Activated CD4-positive, alpha-beta T cell treated with anti-CD3 and anti-CD28 coated beads for 36 hours (primary cell): ENCODE measurements at regions of chr7 and their contacts with region 1.

Region 1: GRCh38 chr7:82044497-82045080 is 274.7 kb upstream of the HGF start:
- DNase-seq: peak; percentile 24
- ATAC-seq: no peak
- H3K4me3 Mint-ChIP-seq: no peak overlapping the region
- H3K27ac Mint-ChIP-seq: no peak overlapping the region
- H3K4me1 Mint-ChIP-seq: no peaks in the 10 kb centered on the region
- H3K27me3 Mint-ChIP-seq: no peaks in the 10 kb centered on the region

Region 2: GRCh38 chr7:81925530-81925929 is 119.1 kb before region 1 on chr7:
- CTCF ChIA-PET with region 1: no interaction called
- POLR2A ChIA-PET with region 1: no interaction called
- intact Hi-C with region 1: no loop called
- DNase-seq: no peak
- ATAC-seq: no peak
- H3K4me3 Mint-ChIP-seq: no peak overlapping the region
- H3K27ac Mint-ChIP-seq: no peak overlapping the region
- H3K4me1 Mint-ChIP-seq: no peaks in the 10 kb centered on the region
- H3K27me3 Mint-ChIP-seq: no peaks in the 10 kb centered on the region

Region 3: GRCh38 chr7:82477733-82478515 is 433.3 kb after region 1 on chr7:
- CTCF ChIA-PET with region 1: no interaction called
- POLR2A ChIA-PET with region 1: no interaction called
- intact Hi-C with region 1: loop called in 1 of 2 experiments (anchors 10 kb)
- DNase-seq: no peak
- ATAC-seq: no peak
- H3K4me3 Mint-ChIP-seq: no peak overlapping the region
- H3K27ac Mint-ChIP-seq: no peak overlapping the region
- H3K4me1 Mint-ChIP-seq: no peaks in the 10 kb centered on the region
- H3K27me3 Mint-ChIP-seq: no peaks in the 10 kb centered on the region

Region 4: GRCh38 chr7:82572195-82572880 is 527.7 kb after region 1 on chr7:
- CTCF ChIA-PET with region 1: interaction called, 6 read pairs
- POLR2A ChIA-PET with region 1: no interaction called
- intact Hi-C with region 1: loop called (anchors 1 to 10 kb)
- DNase-seq: peak; percentile 83
- ATAC-seq: peak; percentile 61
- H3K4me3 Mint-ChIP-seq: no peak overlapping the region
- H3K27ac Mint-ChIP-seq: no peak overlapping the region
- H3K4me1 Mint-ChIP-seq: no peaks in the 10 kb centered on the region
- H3K27me3 Mint-ChIP-seq: no peaks in the 10 kb centered on the region

Region 5: GRCh38 chr7:82605247-82605872 is 560.8 kb after region 1 on chr7:
- CTCF ChIA-PET with region 1: interaction called, 4 read pairs
- POLR2A ChIA-PET with region 1: no interaction called
- intact Hi-C with region 1: loop called (anchors 10 kb)
- DNase-seq: peak; percentile 13
- ATAC-seq: no peak
- H3K4me3 Mint-ChIP-seq: no peak overlapping the region
- H3K27ac Mint-ChIP-seq: no peak overlapping the region
- H3K4me1 Mint-ChIP-seq: no peaks in the 10 kb centered on the region
- H3K27me3 Mint-ChIP-seq: no peaks in the 10 kb centered on the region

Region 6: DNA sequence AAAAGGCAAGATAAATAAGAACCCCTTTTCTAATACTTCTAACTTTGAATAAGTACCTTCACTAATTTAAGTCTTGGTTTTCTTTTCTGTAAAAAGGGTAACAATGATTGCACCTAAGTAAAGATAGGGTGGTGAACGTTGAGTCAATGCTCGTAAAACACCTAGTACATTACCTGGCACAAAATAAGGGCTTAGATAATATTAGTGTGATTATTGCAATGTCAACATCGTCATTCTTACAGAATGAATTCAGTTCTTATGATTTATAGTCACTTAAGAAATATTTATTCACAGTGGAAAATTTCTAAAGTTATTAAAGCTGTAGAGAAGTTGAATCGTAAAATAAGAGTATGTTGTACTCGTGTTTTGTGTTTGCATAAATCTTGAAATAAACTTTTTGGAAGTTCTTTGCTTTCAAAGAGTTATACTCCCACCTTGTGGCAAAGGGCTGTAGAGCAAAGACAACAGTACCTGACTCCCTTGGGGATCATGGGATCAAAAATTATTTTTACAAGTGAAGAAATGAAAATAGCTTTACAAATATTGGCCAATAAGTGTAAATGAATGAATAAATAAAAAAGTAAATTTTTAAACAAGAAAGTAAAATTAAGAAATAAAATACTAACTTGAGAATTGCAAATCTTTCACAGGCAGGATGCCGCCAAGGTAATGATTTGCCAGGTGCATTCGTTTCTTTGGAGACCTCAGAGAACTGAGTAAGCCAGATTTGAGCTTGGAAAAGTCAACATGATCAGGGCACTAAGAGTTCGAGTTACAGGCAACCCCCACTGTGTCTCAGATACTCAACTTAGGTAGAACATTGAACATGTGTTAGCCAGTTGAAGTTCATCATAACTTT is 684.8 kb after region 1 on chr7:
- CTCF ChIA-PET with region 1: no interaction called
- POLR2A ChIA-PET with region 1: no interaction called
- intact Hi-C with region 1: loop called in 1 of 2 experiments (anchors 5 kb)
- DNase-seq: no peak
- ATAC-seq: no peak
- H3K4me3 Mint-ChIP-seq: no peak overlapping the region
- H3K27ac Mint-ChIP-seq: no peak overlapping the region
- H3K4me1 Mint-ChIP-seq: no peaks in the 10 kb centered on the region
- H3K27me3 Mint-ChIP-seq: no peaks in the 10 kb centered on the region